ENCODE measurements at regions of chr13 and their contacts with region 1.

Region 1: DNA sequence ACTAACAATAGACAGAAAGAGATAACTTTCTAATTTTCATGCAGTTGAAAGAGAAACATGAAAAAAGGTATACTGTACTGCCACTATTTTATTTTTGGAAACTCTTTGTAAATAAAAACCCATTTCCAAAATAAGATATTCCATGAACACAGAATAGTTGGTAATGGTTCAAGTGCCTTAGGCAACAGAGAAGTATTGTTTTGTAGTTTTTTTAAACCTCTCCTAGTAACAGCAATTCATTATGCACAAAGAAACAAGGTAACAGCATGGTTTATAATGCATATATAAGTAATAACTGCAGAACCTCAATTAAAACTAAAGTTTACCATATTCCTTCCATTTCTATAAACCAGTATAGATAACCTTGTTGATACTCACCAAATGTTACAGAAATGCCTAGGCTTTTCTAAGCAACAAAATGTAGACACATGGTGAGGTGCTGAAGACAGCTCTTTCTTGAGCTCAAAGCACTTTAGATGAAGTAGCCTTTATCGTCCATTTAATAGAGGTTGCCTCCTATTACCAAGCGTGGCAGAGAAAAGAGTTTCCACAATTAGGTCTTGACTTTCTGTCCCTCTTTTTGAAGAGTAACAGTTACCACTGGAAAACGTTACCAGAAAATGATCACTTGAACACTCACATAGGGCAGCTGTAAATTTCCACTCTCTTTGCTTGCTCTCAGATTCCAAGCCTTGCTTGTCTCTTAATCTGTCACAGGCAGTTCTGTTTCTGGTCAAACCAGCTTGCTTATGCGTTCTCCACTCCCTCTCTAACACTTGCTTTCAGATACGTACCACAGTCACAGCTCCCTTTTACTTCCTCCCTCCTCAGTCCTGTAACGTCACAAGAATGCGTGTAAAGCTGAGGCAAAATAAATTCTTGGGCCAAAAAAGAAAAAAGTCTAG is 42.9 kb downstream of the CAB39L start:
- DNase-seq: no peak
- ATAC-seq: peak; percentile 96

Region 2: DNA sequence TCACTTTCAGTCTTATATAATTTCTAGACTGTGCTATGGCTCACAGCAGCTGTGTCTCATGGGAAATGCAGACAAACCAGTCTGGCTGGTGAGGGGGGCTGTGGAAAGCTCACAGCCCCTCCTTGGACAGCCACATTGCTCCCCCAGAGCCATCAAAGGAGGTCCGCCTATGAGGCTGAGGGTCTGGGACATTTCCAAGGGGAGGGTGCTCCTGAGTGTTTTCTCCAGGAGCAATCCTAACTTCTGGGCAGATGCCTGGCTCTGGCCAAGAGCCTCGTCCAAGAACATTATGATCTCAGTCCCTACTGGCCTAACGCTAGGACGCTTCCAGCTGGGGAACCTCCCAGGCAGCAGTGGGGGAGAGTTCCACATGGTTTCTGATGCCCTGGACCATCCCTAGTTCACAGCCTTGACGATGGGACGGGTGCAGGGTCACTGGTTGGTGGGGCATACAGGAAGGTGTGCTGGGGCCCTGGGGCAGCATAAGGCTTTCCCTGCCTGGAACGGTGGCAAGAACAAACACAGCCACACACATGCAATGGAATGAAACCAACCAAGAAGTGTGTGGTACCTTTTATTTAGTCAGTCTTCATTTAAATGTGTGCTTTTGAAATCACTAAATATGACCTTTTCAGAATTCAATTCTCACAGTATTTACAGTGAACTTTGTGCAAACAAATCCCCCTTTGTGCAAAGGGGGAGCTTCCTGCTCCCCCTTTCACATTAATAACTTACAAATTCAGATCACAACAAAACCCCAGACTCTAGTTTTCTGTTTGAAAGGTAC is 92.7 kb before region 1 on chr13:
- intact Hi-C with region 1: loop called (anchors 2 kb)
- DNase-seq: peak; percentile 89
- ATAC-seq: peak; percentile 93

Region 3: DNA sequence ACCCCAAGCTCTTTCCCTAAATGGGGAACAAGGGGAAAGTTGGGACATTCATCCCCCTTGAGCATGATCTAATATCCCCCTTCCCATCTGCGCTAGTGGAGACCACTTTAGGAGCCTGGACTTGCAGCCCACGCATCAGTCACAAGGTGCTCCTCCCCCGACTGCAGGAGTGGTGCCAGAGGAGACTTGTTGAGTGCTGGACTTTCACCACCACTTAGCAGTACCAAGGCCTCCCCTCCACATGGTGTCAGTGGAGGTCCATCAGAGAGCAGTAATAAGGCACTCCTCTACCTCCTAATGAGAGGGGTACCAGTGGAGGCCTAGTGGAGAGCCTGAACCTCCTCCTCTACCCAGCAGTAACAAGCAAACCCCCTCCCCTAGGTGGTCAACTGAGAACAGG is 20.4 kb after region 1 on chr13:
- intact Hi-C with region 1: no loop called
- DNase-seq: no peak
- ATAC-seq: no peak

Region 4: DNA sequence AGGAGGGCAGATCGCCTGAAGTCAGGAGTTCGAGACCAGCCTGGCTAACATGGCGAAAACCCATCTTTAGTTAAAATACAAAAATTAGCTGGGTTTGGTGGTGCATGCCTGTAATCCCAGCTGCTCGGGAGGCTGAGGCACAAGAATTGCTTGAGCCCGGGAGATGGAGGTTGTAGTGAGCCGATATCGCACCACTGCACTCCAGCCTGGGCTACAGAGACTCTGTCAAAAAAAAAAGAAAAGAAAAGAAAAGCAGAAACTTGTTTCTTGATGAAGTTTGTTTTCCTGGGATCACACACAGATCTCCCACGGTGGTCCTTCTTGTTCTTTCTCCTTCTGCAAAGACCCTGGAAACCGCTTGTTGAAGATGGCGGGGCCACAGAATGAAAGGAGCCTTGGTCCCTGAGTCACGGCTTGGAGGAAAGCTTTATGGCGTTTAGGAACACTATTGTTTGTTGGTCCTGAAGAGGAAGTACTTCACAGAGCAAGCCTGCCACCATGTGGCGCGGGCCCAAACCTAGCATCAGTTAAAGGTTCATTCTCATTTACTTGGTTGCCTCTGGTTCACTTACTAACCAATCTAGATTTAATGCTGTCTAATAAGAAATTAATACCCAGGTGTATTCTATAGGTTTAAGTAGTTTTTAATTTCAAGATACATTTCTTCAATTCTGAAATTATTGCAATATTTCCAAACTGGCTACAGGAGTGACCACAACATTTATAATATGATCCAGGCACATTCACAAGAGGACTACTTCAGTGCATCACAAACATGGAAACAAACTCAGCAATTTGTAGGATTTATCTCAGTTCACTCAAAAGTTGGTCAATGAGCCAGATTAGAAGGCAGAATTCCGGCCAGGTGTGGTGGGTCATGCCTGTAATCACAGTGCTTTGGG is 206.0 kb after region 1 on chr13:
- intact Hi-C with region 1: loop called (anchors 5 kb)
- DNase-seq: peak; percentile 93
- ATAC-seq: peak; percentile 92